ENCODE measurements at regions of chr1 and their contacts with region 1.

Region 1: DNA sequence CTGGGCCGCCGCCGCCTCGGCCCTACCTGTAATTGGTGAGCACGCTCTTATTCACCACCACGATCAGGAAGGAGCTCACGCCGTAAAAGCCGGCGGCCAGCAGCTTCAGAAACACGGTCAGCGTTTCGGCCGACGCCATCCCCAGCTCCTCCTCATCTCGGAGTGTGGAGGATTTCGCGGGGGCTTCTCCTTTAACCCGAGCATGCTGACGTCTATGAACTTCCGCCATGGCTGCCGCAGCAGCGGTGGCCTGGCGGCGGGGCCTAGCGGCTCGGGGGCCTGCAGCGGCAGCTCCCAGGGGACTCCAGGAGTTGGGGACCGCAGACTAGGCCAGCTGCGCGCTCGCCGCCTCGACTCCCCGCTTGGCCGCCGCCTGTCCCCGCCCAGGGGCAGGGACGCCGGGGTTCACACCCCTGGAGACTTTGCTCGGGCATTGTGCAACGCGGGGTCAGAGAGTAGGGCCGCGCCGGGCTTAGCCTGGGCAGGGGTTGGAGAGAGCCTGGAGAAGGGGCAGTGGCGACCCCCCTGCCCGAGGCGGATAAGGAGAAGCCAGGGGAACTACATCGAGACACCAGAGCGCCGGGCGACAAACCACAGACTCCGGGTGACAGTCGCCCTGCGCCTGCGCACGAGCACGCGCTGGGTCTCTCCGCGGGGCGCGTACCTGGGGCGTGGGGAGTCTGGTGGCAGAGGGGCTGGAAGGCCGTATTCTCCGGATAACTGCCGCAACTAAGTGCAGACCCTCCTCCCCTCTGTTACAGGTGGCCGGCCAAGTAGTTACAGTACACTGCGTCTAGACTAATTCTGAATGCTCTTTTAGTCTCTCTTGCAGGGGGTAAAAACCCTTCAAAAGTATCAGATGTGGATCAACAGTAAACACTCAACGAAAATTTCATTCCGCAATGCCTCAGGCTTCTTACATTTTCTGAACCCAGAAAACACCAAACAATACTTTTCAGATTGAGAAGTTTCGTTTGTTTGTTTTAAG is at the start of gene SLC35D1:
- DNase-seq: peak; percentile 71
- H3K4me3 Mint-ChIP-seq: peak within 1 kb of the TSS; percentile 92
- H3K27ac Mint-ChIP-seq: peak within 1 kb of the TSS; percentile 93
- H3K4me1 Mint-ChIP-seq: peaks cover 25% of the 10 kb centered on the region
- H3K27me3 Mint-ChIP-seq: peaks cover 7% of the 10 kb centered on the region
- total RNA-seq, gene SLC35D1: 14.5 and 14.8 TPM in 2 replicates

Region 2: DNA sequence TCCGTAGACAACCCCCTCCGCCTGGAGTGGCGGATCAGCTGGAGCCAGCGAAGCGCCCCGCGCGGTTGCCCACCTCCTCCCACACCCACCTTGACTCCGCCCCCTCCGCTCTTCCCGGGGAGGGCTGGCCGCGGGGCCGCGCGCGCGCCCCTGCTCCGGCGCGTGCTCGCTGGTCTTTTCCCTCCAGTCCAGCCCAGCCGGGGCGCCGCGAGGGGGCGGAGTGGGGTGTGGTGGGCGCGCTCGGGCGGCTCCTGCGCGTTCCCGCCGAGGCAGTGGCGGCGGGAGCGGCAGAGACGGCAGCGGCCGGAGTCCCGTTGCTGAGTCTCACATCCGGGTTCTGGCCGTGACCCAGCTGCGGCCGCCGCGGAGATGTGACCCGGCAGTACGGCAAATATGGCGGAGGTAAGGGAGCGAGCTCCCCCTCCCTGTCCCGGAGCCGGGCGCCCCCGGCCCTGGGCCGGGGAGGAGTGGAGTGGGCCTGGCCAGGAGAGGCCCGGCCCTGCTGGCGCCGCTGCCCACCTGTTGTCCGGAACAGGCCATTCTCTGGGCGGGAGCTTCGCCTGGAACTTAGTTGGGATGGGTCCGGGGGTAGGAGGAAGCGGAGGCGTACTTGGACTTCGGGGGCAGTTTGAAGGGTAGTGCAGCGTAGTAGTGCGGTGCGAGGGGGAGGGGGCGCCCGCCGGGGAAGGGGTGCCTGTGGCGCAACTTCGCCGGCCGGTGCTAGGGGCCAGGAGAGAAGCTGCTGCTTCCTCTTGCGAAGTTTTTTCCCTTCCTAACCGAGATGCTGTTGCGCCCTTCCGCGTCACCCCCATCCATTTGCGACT is 123.9 kb before region 1 on chr1:
- intact Hi-C with region 1: loop called (anchors 2 kb)
- DNase-seq: peak; percentile 93
- H3K4me3 Mint-ChIP-seq: peak overlapping the region; percentile 90
- H3K27ac Mint-ChIP-seq: peak overlapping the region; percentile 91
- H3K4me1 Mint-ChIP-seq: peaks cover 55% of the 10 kb centered on the region
- H3K27me3 Mint-ChIP-seq: no peaks in the 10 kb centered on the region

Region 3: DNA sequence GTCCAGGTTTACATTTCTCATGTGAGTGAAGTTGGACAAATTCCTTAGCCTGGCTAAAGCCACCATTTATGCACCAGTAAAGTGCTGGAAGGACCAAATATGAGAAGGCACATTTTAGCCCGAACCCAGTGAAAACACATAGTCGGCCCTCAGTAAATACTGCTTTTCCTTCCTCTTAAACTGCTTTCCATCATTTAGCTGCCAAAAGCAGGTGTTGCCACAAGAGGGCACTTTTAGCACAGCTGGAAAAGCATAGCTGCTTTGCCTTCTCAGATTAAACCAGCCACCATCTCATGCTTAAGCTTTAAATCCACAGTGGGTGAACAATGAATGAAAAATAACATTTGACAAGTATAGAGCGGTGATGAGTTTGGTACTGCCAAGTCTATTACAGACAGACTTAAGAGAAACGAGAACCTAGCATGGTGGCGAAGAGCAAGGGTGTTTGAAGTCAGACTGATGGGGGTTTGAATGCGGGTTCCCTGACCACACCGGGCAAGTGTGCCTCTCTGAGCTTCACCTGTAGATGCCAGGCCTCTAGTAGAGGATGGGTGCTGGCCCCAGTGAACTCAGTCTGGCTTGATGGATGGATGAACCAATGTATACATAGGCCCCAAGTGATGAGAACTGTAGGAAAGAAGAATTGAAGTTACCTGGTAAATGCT is 57.9 kb before region 1 on chr1:
- intact Hi-C with region 1: loop called (anchors 5 kb)
- DNase-seq: peak; percentile 49
- H3K4me3 Mint-ChIP-seq: no peak overlapping the region
- H3K27ac Mint-ChIP-seq: no peak overlapping the region
- H3K4me1 Mint-ChIP-seq: peaks cover 15% of the 10 kb centered on the region
- H3K27me3 Mint-ChIP-seq: no peaks in the 10 kb centered on the region

Region 4: GRCh38 chr1:67100833-67101232 is 46.8 kb after region 1 on chr1:
- intact Hi-C with region 1: no loop called
- DNase-seq: no peak
- H3K4me3 Mint-ChIP-seq: no peak overlapping the region
- H3K27ac Mint-ChIP-seq: no peak overlapping the region
- H3K4me1 Mint-ChIP-seq: no peaks in the 10 kb centered on the region
- H3K27me3 Mint-ChIP-seq: peaks cover 14% of the 10 kb centered on the region

Region 5: DNA sequence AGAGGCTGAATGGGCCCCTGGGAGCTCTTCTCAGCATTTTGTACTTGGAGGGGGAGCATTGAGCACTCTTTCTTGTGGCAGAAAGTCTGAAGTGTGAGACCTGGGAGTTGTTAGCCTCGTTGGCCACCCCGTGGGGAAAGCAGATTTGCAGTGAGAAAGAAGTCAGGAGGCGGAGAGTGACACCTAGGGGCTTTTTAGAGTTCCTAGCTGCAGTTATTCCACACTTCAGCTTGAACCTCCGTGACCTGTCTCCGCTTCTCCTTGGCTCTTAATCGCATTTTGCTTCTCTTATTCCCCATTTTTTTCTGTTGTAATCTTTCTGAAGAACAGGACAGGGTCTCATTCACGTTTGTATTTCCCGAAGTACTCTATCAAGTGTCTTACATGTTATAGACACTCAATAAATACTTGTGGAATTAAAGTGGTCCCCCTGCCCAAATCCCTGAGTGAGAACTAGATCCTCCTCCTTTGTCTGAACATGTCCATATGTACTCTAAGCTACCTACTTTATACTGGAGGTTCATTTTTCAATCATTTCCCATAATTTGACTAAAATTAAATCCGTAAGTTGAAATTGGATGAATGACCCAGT is 95.2 kb after region 1 on chr1:
- intact Hi-C with region 1: loop called (anchors 5 kb)
- DNase-seq: peak; percentile 31
- H3K4me3 Mint-ChIP-seq: no peak overlapping the region
- H3K27ac Mint-ChIP-seq: no peak overlapping the region
- H3K4me1 Mint-ChIP-seq: peaks cover 33% of the 10 kb centered on the region
- H3K27me3 Mint-ChIP-seq: peaks cover 25% of the 10 kb centered on the region

Region 6: GRCh38 chr1:67194209-67194863 is 140.3 kb after region 1 on chr1:
- intact Hi-C with region 1: loop called (anchors 5 kb)
- DNase-seq: no peak
- H3K4me3 Mint-ChIP-seq: no peak overlapping the region
- H3K27ac Mint-ChIP-seq: peak overlapping the region; percentile 60
- H3K4me1 Mint-ChIP-seq: peaks cover 10% of the 10 kb centered on the region
- H3K27me3 Mint-ChIP-seq: no peaks in the 10 kb centered on the region

Region 7: GRCh38 chr1:67214420-67215174 is 160.5 kb after region 1 on chr1:
- intact Hi-C with region 1: loop called (anchors 5 kb)
- DNase-seq: no peak
- H3K4me3 Mint-ChIP-seq: no peak overlapping the region
- H3K27ac Mint-ChIP-seq: no peak overlapping the region
- H3K4me1 Mint-ChIP-seq: peaks cover 32% of the 10 kb centered on the region
- H3K27me3 Mint-ChIP-seq: no peaks in the 10 kb centered on the region

Region 8: GRCh38 chr1:67347688-67348472 is 293.8 kb after region 1 on chr1:
- intact Hi-C with region 1: no loop called
- DNase-seq: no peak
- H3K4me3 Mint-ChIP-seq: no peak overlapping the region
- H3K27ac Mint-ChIP-seq: no peak overlapping the region
- H3K4me1 Mint-ChIP-seq: peaks cover 27% of the 10 kb centered on the region
- H3K27me3 Mint-ChIP-seq: no peaks in the 10 kb centered on the region

Region 9: DNA sequence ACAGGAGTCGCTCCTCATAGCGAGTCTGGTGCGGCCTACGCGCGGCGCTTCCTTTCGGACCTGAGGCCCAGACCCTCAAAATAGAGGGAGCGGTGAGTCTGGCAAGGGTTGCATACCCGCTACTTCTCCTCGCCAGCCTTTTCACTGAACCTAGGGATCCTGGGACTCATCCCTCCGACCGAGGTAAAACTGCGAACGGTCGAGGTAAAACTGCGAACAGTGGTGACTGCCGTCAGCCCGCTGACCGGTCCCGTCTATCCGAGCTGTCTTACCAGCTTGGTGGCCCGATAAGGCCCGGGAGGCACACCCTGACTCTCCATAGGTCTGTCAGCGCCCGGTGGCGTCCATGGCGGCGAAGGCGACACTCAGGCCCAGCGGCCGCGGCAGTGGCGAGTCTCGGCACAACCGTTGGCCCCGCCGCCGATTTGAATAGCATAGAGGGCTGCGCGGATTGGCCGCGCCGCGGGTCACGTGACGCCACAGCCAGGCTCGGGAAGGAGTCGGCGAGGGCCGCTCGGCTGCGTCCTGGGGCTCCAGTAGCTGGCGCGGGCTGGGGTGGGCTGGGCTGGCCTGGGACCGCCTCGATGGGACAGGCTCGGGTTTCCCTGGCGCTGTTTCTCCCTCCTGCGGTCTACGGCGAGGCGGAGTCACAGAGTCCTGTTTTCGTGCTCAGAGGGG is 1442.7 kb after region 1 on chr1 and contains the start of gene DEPDC1:
- intact Hi-C with region 1: loop called (anchors 5 kb)
- DNase-seq: peak; percentile 84
- H3K4me3 Mint-ChIP-seq: peak within 1 kb of the TSS; percentile 88
- H3K27ac Mint-ChIP-seq: peak within 1 kb of the TSS; percentile 86
- H3K4me1 Mint-ChIP-seq: peaks cover 33% of the 10 kb centered on the region
- H3K27me3 Mint-ChIP-seq: peaks cover 22% of the 10 kb centered on the region
- total RNA-seq, gene DEPDC1: 19.9 and 25.3 TPM in 2 replicates

Measured in activated T-helper 2 cell treated with anti-CD3 and anti-CD28 coated beads, Interferon-gamma antibody, Interleukin-2, Interleukin-4, amounts not matched to agents 10 μg/mL and 5 μg/mL and 100 μg/mL, durations not matched to agents 14 hours and 24 hours and 36 hours (primary cell).